Lower leg skin (tissue), 4 donors: ENCODE measurements at regions of chr10 and their contacts with region 1.

Region 1: GRCh38 chr10:24929056-24929544 is 23.3 kb downstream of the PRTFDC1 start:
- DNase-seq: no peak
- H3K4me3 ChIP-seq: no peak overlapping the region
- CTCF ChIP-seq: no peak
- POLR2A ChIP-seq: no peak

Region 2: DNA sequence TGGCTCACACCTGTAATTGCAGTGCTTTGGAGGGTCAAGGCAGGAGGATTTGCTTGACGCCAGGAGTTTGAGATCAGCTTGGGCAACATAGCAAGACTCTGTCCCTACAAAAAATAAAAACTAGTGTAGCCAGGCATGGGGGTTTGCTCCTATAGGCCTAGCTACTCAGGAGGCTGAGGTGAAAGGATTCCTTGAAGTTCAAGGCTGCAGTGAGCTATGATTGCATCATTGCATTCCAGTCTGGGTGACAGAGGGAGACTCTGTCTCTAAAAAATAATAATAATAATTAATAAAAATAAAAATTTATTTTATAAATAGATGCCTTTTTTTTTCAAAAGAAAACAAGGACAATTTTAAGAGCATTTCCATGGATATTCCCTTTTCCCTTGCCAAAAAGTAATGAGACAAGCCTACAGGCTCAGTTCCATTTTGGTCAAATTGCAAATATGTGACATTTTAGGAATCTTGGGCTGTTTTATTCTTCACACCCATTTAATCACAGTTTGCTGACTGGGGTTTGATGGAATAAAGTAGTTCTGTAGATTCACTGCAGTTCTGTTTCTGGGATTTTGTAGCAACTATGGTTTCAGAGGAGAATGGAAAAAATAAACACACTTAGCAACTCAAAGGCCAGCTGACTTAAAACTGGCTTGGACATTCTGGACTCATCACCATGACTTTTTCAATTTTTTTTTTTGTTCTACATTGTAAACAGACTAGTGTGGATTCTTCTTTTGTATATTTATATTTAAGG is 157.0 kb before region 1 on chr10:
- intact Hi-C with region 1: no loop called
- DNase-seq: no peak
- H3K4me3 ChIP-seq: no peak overlapping the region
- CTCF ChIP-seq: no peak
- POLR2A ChIP-seq: no peak

Region 3: DNA sequence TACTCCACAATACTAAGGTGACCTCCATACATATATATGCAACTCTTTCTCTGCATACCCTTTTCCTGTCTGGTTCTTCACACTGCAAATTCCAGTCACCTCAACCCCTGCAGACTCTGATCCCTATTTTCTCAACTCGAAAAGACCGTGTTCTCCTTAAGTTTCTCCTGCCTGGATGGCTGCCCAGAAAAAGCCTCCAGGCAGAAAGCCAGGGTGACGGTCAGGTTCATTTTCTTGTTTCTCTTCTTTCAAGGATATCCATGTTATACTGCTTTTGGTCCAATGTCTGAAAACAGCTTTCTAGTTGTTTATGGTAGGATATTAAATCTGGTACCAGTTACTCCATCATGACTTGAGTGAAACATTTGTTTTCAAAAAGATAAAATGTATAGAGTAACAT is 737.2 kb after region 1 on chr10:
- intact Hi-C with region 1: loop called (anchors 5 kb)
- DNase-seq: no peak
- H3K4me3 ChIP-seq: no peak overlapping the region
- CTCF ChIP-seq: no peak
- POLR2A ChIP-seq: no peak